ENCODE measurements at regions of chr5 and their contacts with region 1.

Region 1: DNA sequence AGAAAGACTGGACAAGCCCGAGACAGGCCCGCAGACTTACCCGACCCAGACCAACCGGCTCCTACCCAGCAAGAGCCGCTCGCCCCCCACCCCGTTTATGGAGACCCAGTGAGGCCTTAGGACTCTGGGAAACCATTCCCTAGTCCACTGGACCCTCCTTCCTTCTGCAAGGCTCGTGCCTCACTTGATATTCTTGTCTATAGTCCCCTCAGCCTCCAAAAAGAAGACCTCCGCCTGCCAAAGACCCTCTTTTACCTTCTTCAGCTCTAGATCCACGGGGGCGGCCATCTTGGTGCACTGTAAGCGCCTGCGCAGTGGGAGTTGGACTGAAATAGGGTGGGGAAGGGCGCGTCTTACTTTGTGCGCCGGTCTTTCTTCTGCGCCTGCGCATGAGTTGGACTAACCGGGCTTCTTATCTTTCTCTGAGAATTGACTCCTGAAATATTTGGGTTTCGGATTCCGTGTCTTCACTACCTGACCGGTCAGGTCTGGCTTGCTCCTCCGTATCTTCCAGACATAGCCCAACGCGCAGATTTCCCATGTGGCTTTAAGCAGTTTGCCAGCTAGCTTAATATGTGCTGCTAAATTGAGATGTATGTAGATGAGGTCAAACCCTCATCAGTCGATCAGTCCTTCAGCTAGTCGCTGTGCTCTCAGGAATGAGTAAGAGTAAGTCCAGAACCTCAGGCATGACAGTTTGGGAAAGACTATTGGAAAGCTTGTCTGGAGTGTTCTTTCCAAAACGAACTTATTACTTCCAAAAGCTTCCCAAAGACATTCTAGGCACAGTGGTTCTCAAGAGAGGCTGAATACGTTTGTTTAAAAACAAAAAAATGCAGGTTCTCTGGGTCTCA is at the start of gene PFDN1:
- DNase-seq: peak; percentile 88 to 94 (median 94)
- H3K4me3 ChIP-seq: peak within 1 kb of the TSS; percentile 84 to 97 (median 90)
- H3K4me3 Mint-ChIP-seq: peak within 1 kb of the TSS; percentile 93 to 99
- H3K27ac ChIP-seq: peak within 1 kb of the TSS; percentile 62 to 94
- H3K27ac Mint-ChIP-seq: peak within 1 kb of the TSS; percentile 95 to 100 (median 99)
- H3K4me1 ChIP-seq: peaks cover 16 to 29% of the 10 kb centered on the region in 2 donors
- H3K4me1 Mint-ChIP-seq: peaks cover 41% of the 10 kb centered on the region
- H3K27me3 ChIP-seq: no peaks in the 10 kb centered on the region
- H3K27me3 Mint-ChIP-seq: no peaks in the 10 kb centered on the region
- CTCF ChIP-seq: no peak
- polyA plus RNA-seq, gene PFDN1: 44.7 to 105 (median 82.2) TPM

Region 2: GRCh38 chr5:140251527-140251973 is 51.5 kb before region 1 on chr5:
- intact Hi-C with region 1: loop called in 1 of 2 experiments (anchors 5 kb)
- DNase-seq: peak; percentile 96 to 98 (median 97)
- H3K4me3 ChIP-seq: peak overlapping the region in 1 of 3 experiments; percentile 19
- H3K4me3 Mint-ChIP-seq: peak overlapping the region; percentile 62 to 67
- H3K27ac ChIP-seq: peak overlapping the region; percentile 47 to 91
- H3K27ac Mint-ChIP-seq: peak overlapping the region in 2 of 7 donors; percentile 93 to 98
- H3K4me1 ChIP-seq: peaks cover 59 to 66% of the 10 kb centered on the region in 2 donors
- H3K4me1 Mint-ChIP-seq: peaks cover 21% of the 10 kb centered on the region
- H3K27me3 ChIP-seq: no peaks in the 10 kb centered on the region
- H3K27me3 Mint-ChIP-seq: peaks cover 0 to 4% (median 2%) of the 10 kb centered on the region in 3 donors
- CTCF ChIP-seq: no peak

Region 3: DNA sequence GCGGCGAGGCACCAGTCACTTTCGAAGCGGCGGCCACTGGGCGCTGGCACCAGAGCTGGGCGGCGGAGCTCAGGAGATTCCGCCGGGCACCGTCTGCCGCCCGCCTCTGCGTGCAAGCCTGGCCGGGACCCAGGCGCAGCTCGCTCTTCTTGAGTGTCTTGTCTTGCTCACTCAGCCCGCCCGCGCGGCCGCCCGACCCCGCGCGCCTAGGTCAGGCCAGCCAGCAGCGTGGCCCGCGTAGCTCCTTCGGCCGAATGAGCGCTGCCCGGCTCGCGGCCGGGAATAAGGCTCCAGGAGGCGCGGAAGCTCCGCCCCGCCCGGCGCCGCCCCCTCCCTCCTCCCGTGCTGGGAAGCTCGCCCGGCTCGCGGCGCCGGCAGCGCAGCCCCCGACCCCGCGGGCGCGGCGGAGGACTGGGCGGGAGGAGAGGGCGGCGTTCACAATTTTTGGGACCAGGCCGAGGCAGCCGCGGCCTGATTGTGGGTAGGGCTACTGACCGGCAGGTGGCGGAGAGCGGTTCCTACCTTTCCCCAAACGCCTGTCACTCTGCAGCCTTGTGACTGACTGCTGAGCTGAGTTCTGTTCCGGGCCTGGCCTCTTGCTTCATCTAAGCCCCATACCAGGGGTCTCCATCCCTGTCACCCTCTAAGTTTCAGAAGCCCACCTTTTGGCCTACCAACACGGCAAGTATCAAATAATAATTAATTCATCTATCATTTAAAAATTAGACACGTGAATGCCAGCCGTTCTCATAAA is 43.5 kb after region 1 on chr5 and contains the start of gene HBEGF:
- intact Hi-C with region 1: loop called (anchors 5 kb)
- DNase-seq: peak; percentile 70 to 79 (median 74)
- H3K4me3 ChIP-seq: peak within 1 kb of the TSS; percentile 52 to 99 (median 82)
- H3K4me3 Mint-ChIP-seq: peak within 1 kb of the TSS; percentile 94 to 100
- H3K27ac ChIP-seq: peak within 1 kb of the TSS in 1 of 2 donors; percentile 76
- H3K27ac Mint-ChIP-seq: peak within 1 kb of the TSS; percentile 54 to 95 (median 88)
- H3K4me1 ChIP-seq: peaks cover 57 to 65% of the 10 kb centered on the region in 2 donors
- H3K4me1 Mint-ChIP-seq: peaks cover 58% of the 10 kb centered on the region
- H3K27me3 ChIP-seq: no peaks in the 10 kb centered on the region
- H3K27me3 Mint-ChIP-seq: peaks cover 5 to 6% (median 5%) of the 10 kb centered on the region in 3 donors
- CTCF ChIP-seq: peak; percentile 55
- polyA plus RNA-seq, gene HBEGF: 25.2 to 548 (median 31.6) TPM

Measured in CD14-positive monocyte (primary cell).